T-cell (primary cell): ENCODE measurements at regions of chr1 and their contacts with region 1.

Region 1: DNA sequence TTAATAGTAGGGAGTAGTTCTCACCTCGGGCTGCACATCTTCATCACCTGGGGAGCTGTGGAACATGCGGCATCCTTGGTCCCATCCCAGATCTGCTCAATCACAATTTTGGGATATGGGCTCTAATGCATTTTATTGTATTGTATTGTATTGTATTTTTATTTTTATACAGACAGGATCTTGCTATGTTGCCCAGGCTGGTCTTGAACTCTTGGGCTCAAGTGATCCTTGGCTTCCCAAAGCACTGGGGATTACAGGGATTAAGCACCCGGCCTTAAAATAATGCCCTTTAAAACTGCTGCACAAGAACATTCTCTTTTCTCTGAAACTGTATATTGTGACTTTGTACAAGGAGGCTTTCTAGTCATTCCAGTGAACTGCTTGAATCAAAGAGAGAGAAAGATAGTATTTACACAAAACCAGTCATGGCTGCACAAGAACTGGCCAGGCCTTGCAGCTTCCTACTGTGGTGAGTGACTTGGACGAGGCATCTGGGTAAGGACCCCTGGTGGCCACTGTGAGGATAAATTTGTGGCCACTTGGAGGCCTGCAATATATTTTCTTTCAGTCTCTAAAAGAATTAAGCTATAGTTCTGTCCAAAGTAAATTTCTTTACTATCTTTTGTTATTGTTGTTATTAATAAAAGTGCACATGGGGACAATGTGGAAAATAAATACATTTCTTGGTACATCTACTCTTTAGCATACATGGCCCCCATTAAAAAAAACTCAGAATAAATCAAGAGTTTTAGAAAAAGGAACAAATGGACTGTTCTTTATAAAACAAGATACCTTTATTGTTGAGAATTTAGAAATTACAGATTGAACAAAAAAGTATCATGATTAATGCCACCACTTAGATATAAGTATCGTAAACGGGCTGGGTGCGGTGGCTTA is 48.0 kb downstream of the TBCE start:
- DNase-seq: peak; percentile 9 to 74 (median 45)
- ATAC-seq: peak; percentile 70 to 78 (median 76)
- H3K4me3 ChIP-seq: no peak overlapping the region
- H3K4me3 Mint-ChIP-seq: no peak overlapping the region
- H3K27ac ChIP-seq: no peak overlapping the region
- H3K27ac Mint-ChIP-seq: no peak overlapping the region
- H3K4me1 ChIP-seq: no peaks in the 10 kb centered on the region
- H3K4me1 Mint-ChIP-seq: peaks cover 3 to 13% (median 9%) of the 10 kb centered on the region in 3 donors
- H3K27me3 ChIP-seq: no peaks in the 10 kb centered on the region
- H3K27me3 Mint-ChIP-seq: no peaks in the 10 kb centered on the region

Region 2: GRCh38 chr1:235253219-235253962 is 161.9 kb before region 1 on chr1:
- CTCF ChIA-PET with region 1: interaction called, 8 to 26 read pairs
- POLR2A ChIA-PET with region 1: no interaction called
- DNase-seq: peak; percentile 28 to 82 (median 56)
- ATAC-seq: peak; percentile 89 to 96 (median 95)
- H3K4me3 ChIP-seq: no peak overlapping the region
- H3K4me3 Mint-ChIP-seq: no peak overlapping the region
- H3K27ac ChIP-seq: no peak overlapping the region
- H3K27ac Mint-ChIP-seq: peak overlapping the region; percentile 28 to 52
- H3K4me1 ChIP-seq: peaks cover 0 to 4% of the 10 kb centered on the region in 2 experiments
- H3K4me1 Mint-ChIP-seq: peaks cover 35 to 44% (median 36%) of the 10 kb centered on the region in 3 donors
- H3K27me3 ChIP-seq: no peaks in the 10 kb centered on the region
- H3K27me3 Mint-ChIP-seq: no peaks in the 10 kb centered on the region

Region 3: GRCh38 chr1:235442788-235443429 is 27.7 kb after region 1 on chr1:
- CTCF ChIA-PET with region 1: no interaction called
- POLR2A ChIA-PET with region 1: no interaction called
- DNase-seq: no peak
- ATAC-seq: no peak
- H3K4me3 ChIP-seq: no peak overlapping the region
- H3K4me3 Mint-ChIP-seq: no peak overlapping the region
- H3K27ac ChIP-seq: no peak overlapping the region
- H3K27ac Mint-ChIP-seq: peak overlapping the region in 1 of 2 donors; percentile 55
- H3K4me1 ChIP-seq: no peaks in the 10 kb centered on the region
- H3K4me1 Mint-ChIP-seq: no peaks in the 10 kb centered on the region
- H3K27me3 ChIP-seq: no peaks in the 10 kb centered on the region
- H3K27me3 Mint-ChIP-seq: no peaks in the 10 kb centered on the region

Region 4: DNA sequence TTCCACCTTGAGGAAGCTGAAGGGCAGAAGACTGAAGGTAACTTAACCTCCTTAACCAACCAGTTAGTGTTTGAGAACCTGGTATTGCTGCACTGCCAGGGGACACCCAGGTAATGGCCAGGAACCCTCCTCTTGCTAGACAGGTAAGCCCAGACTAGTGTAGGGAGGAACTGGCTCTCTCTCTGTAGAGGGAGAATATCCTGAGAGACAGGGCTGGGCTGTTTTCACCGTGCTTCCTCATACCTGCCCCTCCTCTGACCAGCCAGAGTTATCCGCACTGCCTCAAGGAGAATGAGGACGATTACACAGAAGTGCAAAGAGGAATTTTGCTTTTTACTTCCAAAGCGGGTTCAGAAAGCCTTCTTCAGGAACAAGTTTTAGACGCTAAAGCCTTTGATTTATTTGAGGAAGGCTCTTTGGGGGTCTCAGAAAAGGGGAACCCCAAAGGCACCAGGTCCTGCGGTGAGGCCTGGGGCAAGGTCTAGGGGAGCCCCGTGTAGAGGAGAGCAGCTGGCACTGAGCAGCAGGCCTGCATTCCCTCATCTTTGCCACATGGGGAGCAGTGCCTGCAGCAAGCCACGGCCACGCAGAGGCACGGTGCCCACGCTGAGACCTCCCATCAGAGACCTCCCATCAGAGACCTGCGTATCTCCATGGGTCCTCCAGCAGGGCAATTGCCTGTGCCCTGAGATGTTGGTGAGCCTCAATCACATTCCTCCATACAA is 220.8 kb after region 1 on chr1:
- CTCF ChIA-PET with region 1: no interaction called
- POLR2A ChIA-PET with region 1: no interaction called
- DNase-seq: no peak
- ATAC-seq: no peak
- H3K4me3 ChIP-seq: no peak overlapping the region
- H3K4me3 Mint-ChIP-seq: no peak overlapping the region
- H3K27ac ChIP-seq: no peak overlapping the region
- H3K27ac Mint-ChIP-seq: no peak overlapping the region
- H3K4me1 ChIP-seq: peaks cover 0 to 7% of the 10 kb centered on the region in 2 experiments
- H3K4me1 Mint-ChIP-seq: peaks cover 5 to 18% (median 6%) of the 10 kb centered on the region in 3 donors
- H3K27me3 ChIP-seq: peaks cover 0 to 13% of the 10 kb centered on the region in 2 experiments
- H3K27me3 Mint-ChIP-seq: peaks cover 3 to 21% of the 10 kb centered on the region in 2 donors